Motor neuron (in vitro differentiated cells): ENCODE measurements at regions of chr3 and their contacts with region 1.

Region 1: DNA sequence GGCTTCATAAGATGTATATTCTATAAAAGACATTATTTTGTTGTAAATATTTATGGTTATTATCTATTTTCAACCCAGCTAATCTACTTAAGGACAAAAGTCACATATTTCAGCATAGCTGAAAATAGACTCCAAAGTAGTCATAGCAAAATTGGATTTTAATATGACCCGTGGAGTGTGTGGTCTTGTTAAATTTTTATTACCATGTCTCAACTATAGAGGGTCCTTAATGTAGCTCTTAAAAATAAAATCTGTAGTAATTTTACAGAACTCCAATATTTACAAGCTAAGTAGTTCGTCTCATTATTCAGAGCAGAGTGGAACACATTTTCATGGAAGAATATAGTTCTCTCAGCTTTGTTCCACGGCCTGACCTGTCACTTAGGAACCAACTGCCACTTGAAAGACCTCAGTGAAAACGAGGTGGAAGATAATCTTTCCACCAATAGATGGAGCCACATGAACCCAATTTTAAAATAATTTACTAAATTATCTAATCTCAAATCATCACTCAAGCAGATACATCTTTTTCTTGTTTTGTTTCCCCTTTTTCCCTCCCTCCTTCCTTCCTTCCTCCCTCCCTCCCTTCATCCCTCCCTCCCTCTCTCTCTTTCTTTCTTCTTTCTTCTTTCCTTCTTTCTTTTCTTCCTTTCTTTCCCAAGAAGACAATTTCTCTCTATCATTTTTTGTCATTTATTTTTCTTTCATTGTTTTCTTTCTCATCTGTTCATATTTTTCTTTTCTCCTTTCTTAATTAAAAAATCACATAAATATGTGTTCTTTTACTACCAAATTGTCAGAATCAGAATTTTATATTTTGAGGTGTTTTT is 97.2 kb downstream of the CLDN1 start:
- ATAC-seq: peak in 4 of 8 experiments; percentile 18 to 42 (median 36)
- H3K4me3 ChIP-seq: no peak overlapping the region
- H3K27ac ChIP-seq: no peak overlapping the region
- H3K4me1 ChIP-seq: peaks cover 0 to 9% of the 10 kb centered on the region in 2 donors

Region 2: DNA sequence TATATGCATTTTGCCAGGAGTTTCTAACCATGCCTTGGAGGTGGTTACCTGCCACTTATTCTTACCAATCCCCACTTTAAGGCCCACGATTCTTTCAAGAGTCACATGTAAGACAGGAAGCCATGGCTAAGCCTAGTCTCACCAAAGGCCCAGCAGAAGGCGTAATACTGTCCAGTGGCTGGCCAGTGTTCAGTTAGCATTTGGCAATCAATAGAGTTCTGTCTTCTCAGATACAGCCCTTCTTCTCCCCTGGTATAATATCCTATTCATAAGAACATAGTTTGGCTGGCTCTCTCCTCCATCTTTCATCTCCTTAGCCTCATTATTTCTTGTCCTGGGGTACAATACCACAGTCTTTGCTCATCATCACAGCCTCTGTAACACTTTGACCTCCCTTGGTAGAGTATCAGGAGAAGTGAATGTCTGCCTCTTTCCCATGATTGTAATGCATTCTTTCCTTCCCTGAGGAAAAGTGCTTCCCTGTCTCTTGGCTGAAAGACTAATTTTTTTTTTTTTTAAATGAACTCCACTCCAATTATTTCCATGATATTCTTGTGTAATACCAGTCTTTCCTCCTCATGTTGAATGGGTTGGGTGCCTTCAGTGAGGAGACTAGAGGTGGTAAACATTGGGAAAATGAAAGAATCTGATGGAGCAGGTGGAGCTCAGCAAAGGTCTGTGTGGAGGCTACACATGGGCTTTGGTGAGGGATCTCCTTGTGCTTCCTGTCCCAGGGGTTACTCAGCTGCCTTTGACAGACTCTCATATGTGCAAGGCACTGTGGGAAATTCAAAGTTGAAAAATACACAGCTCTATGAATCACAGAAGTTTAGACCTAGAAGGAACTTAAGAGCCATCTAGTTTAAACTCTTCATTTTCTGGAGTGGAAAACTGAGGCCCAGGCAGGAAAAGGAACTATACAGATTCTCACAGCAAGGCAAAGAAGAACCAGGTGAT is 322.6 kb before region 1 on chr3:
- in situ Hi-C with region 1: no loop called
- ATAC-seq: no peak
- H3K4me3 ChIP-seq: no peak overlapping the region
- H3K27ac ChIP-seq: no peak overlapping the region
- H3K4me1 ChIP-seq: no peaks in the 10 kb centered on the region

Region 3: DNA sequence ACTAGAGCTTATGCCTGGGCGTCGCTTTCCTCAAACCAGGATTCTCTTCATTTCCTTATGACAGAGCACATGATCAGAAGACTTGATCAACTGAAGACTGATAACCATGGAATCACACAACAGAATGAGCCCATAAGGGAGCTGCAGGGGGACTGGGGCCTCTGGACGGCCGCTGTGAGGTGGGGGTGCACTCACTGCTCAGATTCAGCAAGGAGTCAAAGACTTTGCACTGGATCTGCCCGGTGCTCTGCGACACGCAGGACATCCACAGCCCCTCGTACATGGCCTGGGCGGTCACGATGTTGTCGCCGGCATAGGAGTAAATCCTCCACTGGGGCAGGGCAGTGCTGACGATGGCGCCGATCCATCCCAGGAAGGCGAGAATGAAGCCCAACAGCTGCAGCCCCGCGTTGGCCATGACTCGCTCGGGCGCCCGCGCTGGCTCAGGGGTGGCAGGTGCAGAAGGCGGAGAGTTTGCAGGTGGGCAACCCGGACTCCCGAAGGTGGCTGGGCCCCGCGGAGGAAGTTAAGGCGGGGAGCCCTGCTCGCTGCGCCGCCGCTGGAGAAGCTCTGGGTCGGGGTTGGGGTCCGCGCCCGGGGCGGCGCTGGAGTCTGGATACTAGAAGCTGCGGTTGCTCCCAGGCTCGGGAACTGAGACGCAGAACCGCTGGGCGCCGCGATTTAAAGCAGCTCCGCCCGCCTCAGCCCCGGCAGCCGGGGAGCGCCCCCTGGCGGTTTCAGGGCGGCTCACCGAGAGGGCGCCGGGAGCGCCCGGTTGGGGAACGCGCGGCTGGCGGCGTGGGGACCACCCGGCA is 96.9 kb after region 1 on chr3 and contains the start of gene CLDN1:
- in situ Hi-C with region 1: loop called in 1 of 9 experiments (anchors 10 kb)
- ATAC-seq: peak; percentile 90 to 98 (median 95)
- H3K4me3 ChIP-seq: peak within 1 kb of the TSS; percentile 58 to 69 (median 62)
- H3K27ac ChIP-seq: no peak within 1 kb of the TSS
- H3K4me1 ChIP-seq: peaks cover 0 to 8% of the 10 kb centered on the region in 2 donors
- total RNA-seq, gene CLDN1: 0.14 to 32.0 (median 1.1) TPM in 7 of 8 experiments, not detected in the other

Region 4: DNA sequence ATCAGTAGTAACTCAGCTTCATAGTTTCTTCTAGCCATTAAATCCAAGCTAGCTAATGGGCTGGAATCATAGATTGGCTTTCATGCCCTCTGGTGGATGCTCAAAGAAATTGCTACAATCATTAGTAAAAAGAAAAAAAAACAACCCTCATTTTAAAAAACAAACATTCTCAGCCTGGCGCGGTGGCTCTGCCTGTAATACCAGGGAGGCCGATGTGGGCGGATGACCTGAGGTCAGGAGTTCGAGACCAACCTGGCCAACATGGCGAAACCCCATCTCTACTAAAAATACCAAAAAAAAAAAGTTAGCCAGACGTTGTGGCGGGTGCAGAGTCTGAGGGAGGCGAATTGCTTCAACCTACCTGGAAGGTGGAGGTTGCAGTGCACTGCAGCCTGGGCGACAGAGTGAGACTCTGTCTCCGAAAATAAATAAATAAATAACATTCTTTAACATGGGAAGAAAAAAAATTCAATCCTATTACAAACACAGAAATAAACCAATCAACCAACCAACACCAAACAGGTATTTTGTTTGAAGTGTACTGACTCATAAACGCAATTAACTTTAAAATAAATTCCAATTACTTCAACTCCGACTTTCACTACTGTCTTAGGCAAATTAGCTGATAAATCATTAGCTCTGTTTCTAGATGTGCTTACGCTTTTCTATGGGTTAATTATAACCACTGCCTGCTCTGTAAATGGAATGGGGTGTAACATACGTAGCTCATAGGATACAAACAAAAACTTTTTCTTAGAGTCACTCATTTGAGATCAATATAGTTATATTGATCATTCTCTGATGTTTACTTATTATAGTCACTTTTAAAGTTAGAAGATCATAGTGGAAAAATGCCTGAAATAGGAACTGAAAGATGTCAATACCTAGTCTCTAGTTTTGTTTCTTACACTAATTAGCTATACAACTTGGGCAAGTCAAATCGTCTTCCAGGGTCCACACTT is 199.7 kb after region 1 on chr3:
- in situ Hi-C with region 1: loop called in 1 of 9 experiments (anchors 25 kb)
- ATAC-seq: peak; percentile 71 to 98 (median 92)
- H3K4me3 ChIP-seq: no peak overlapping the region
- H3K27ac ChIP-seq: no peak overlapping the region
- H3K4me1 ChIP-seq: no peaks in the 10 kb centered on the region